CD4-positive, alpha-beta T cell (primary cell): ENCODE measurements at regions of chr19 and their contacts with region 1.

Region 1: DNA sequence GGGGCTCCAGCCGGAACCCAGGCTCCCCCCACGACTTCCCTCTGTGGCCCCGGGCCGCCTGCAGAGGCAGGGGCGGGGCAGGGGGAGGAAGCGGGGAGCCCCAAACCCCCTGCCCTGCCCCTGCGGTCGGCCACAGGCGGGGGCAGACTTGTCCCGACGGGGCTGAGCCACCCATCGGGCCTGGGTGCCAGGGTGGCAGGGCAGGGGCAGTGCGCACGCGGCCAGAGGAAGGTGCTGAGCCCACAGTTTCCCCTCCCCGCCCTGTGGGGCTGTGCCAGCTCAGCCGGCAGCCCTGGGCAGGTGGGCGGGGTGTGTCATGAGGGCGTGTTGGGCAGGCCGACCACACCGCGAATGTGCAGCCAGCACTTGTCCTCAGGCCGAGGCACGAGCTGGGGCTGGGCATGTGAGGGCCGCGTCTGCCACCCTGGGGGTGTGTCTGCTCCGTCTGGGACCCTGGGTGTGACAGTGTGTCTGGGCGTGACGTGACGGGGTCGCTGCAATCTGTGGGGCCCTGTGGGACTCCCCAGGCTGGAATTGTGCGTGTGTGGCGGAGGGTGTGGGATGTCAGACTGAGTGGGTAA is 17.7 kb downstream of the CCDC97 start:
- DNase-seq: peak; percentile 47 to 97 (median 76)
- ATAC-seq: peak; percentile 65
- H3K4me3 ChIP-seq: peak overlapping the region; percentile 44
- H3K4me3 Mint-ChIP-seq: peak overlapping the region; percentile 82
- H3K27ac ChIP-seq: peak overlapping the region; percentile 74 to 89
- H3K27ac Mint-ChIP-seq: peak overlapping the region; percentile 97
- H3K4me1 ChIP-seq: peaks cover 99% of the 10 kb centered on the region
- H3K4me1 Mint-ChIP-seq: peaks cover 75% of the 10 kb centered on the region
- H3K27me3 ChIP-seq: no peaks in the 10 kb centered on the region
- H3K27me3 Mint-ChIP-seq: no peaks in the 10 kb centered on the region
- CTCF ChIP-seq: no peak

Region 2: GRCh38 chr19:41341669-41342490 is 14.2 kb after region 1 on chr19:
- CTCF ChIA-PET with region 1: interaction called, 4 read pairs
- POLR2A ChIA-PET with region 1: interaction called, 13 read pairs
- intact Hi-C with region 1: no loop called
- DNase-seq: peak in 4 of 14 experiments; percentile 39 to 61 (median 42)
- ATAC-seq: peak; percentile 45
- H3K4me3 ChIP-seq: no peak overlapping the region
- H3K4me3 Mint-ChIP-seq: peak overlapping the region; percentile 58
- H3K27ac ChIP-seq: no peak overlapping the region
- H3K27ac Mint-ChIP-seq: peak overlapping the region; percentile 70
- H3K4me1 ChIP-seq: peaks cover 60% of the 10 kb centered on the region
- H3K4me1 Mint-ChIP-seq: peaks cover 45% of the 10 kb centered on the region
- H3K27me3 ChIP-seq: no peaks in the 10 kb centered on the region
- H3K27me3 Mint-ChIP-seq: no peaks in the 10 kb centered on the region
- CTCF ChIP-seq: peak; percentile 28